Vagina (tissue), 2 donors: ENCODE measurements at regions of chr17 and their contacts with region 1.

Region 1: DNA sequence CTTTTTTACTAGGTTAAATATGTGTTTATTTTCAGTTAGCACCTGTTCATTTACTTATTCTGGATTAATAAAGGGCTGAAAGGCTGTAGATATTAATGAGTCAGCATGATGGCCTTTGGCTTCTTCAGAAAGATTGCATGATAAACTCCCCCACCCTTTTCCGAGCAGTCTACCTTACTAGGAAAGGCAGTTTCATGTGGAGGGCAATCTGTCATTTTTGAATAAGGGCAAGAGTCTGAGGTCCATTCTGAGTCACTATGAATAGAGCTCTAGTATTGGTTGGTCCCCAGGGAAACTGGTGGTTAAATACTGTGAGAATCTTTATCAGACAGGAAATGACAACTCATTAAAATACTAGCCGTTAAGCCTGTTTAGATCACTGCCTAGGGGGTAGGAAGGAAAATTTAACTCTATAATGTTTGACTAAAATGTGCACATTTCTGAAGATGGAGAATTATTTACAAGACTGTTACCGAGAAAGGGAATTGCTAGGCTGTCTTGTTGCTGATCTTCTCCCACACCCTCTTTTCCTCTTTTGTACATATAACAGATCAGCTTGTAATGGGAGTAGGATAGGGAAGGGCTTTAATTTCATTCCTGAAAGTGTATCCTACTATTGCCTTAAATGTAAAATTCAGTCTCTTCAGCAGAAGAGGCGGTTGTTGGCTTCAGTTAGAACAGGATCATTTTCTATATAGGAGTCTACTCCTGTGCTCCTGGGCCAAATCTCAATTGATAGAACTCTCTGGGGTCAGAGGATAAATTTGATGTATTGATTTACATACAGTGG is 63.3 kb downstream of the TUBD1 start:
- DNase-seq: no peak
- H3K4me3 ChIP-seq: peak overlapping the region in 1 of 2 donors; percentile 7
- H3K27ac ChIP-seq: peak overlapping the region; percentile 78
- H3K4me1 ChIP-seq: peaks cover 62% of the 10 kb centered on the region
- H3K27me3 ChIP-seq: no peaks in the 10 kb centered on the region
- CTCF ChIP-seq: no peak
- POLR2A ChIP-seq: no peak

Region 2: GRCh38 chr17:59786536-59787319 is 42.7 kb before region 1 on chr17:
- intact Hi-C with region 1: loop called (anchors 5 kb)
- DNase-seq: peak; percentile 94 to 97
- H3K4me3 ChIP-seq: peak overlapping the region; percentile 11 to 22
- H3K27ac ChIP-seq: peak overlapping the region; percentile 76
- H3K4me1 ChIP-seq: peaks cover 58% of the 10 kb centered on the region
- H3K27me3 ChIP-seq: no peaks in the 10 kb centered on the region
- CTCF ChIP-seq: no peak
- POLR2A ChIP-seq: peak in 1 of 2 donors; percentile 7